ENCODE measurements at regions of chr18 and their contacts with region 1.

Region 1: GRCh38 chr18:6543330-6543908 is 128.7 kb upstream of the L3MBTL4 start:
- DNase-seq: peak; percentile 72
- ATAC-seq: peak; percentile 21; the same call in 1 of the 2 replicates
- H3K4me3 ChIP-seq: no peak overlapping the region
- H3K27ac ChIP-seq: no peak overlapping the region
- H3K4me1 ChIP-seq: peaks cover 17% of the 10 kb centered on the region; the same call in 1 of the 2 replicates
- H3K27me3 ChIP-seq: no peaks in the 10 kb centered on the region
- CTCF ChIP-seq: peak; percentile 77

Region 2: GRCh38 chr18:5527603-5528002 is 1015.8 kb before region 1 on chr18:
- CTCF ChIA-PET with region 1: no interaction called
- POLR2A ChIA-PET with region 1: no interaction called
- intact Hi-C with region 1: no loop called
- DNase-seq: no peak
- ATAC-seq: peak; percentile 62
- H3K4me3 ChIP-seq: no peak overlapping the region
- H3K27ac ChIP-seq: no peak overlapping the region
- H3K4me1 ChIP-seq: no peaks in the 10 kb centered on the region
- H3K27me3 ChIP-seq: no peaks in the 10 kb centered on the region
- CTCF ChIP-seq: no peak

Region 3: GRCh38 chr18:6659963-6660725 is 116.7 kb after region 1 on chr18:
- CTCF ChIA-PET with region 1: no interaction called
- POLR2A ChIA-PET with region 1: no interaction called
- intact Hi-C with region 1: loop called (anchors 5 kb)
- DNase-seq: no peak
- ATAC-seq: no peak
- H3K4me3 ChIP-seq: no peak overlapping the region
- H3K27ac ChIP-seq: no peak overlapping the region
- H3K4me1 ChIP-seq: peaks cover 14% of the 10 kb centered on the region
- H3K27me3 ChIP-seq: no peaks in the 10 kb centered on the region
- CTCF ChIP-seq: no peak

Region 4: DNA sequence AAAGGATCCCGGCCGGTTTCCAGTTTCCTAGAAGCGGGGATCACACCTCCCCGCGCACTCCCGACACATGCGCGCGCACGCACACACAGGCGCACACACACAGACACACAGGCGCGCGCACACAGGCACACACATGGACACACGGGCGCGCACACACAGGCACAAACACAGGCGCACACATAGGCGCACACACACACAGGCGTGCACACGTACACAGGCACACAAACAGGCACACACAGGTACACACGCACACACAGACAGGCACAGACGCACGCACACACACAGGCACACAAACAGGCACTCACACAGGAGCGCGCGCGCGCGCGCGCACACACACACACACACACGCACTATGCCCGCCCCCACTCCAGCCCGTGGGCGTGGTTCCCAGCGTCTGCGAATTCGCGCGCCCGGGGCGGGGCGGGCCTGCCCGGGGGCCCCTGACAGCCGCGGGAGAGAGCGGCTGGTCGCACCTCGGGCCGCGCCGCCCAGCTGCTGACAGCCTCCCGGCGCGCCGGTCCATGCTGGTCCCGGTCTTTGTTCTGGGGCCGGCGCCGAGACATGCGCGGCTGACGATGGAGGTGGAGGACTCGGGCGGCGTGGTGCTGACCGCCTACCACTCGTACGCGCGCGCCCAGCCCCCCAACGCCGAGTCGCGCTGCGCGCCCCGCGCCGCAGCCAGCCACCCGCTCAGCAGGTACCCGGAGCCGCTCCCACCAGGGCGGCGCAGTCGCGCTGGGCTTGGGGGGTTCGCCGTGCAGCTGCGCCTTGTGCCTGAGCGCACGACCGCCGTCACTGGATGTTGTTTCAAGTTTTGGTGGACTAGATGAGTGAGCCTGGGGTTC is 186.1 kb after region 1 on chr18 and contains the start of gene ARHGAP28:
- CTCF ChIA-PET with region 1: interaction called, 3 read pairs
- POLR2A ChIA-PET with region 1: no interaction called
- intact Hi-C with region 1: loop called (anchors 2 kb)
- DNase-seq: peak; percentile 89
- ATAC-seq: peak; percentile 74
- H3K4me3 ChIP-seq: peak within 1 kb of the TSS; percentile 67
- H3K27ac ChIP-seq: peak within 1 kb of the TSS; percentile 67
- H3K4me1 ChIP-seq: peaks cover 37% of the 10 kb centered on the region
- H3K27me3 ChIP-seq: no peaks in the 10 kb centered on the region
- CTCF ChIP-seq: peak; percentile 53
- total RNA-seq, gene ARHGAP28: 8.1 and 10.0 TPM in 2 replicates

Region 5: DNA sequence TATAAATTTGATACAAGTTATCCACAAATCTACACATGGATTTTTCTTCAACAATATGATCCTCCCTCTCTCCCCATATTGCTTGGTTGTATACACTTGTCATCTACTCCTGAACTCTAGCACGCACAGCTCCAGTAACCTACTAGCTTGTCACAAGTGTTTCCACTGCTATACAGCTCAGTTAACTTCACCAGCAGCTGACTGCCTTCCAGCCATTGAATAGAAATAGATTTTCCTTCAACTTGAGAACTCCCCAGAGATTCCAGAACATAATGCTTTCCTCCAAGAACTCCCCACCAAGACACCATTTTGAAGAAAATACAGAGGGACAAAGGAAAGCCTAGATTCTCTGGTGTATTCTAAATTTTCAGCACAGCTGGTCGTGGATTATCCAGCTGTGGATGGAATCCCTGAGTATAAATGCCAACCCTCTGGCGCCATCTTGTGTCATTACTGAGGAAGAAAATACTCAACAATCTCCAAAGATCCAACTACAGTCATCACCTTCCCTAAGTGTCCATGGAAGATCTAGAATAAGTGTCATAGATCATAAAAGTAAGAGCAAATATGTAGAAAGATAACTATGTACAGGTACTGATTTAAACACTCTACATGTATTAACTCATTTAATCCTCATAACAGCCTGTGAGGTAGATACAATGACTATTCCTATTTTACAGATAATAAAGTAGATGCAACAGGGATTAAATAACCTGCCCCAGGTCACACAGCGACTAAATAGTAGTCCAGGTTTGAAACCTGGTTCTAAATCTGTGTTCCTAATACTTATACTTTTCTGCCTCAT is 342.8 kb after region 1 on chr18:
- CTCF ChIA-PET with region 1: interaction called, 15 read pairs
- POLR2A ChIA-PET with region 1: no interaction called
- intact Hi-C with region 1: loop called (anchors 1 kb)
- DNase-seq: peak; percentile 73
- ATAC-seq: peak; percentile 96
- H3K4me3 ChIP-seq: no peak overlapping the region
- H3K27ac ChIP-seq: no peak overlapping the region
- H3K4me1 ChIP-seq: no peaks in the 10 kb centered on the region
- H3K27me3 ChIP-seq: no peaks in the 10 kb centered on the region
- CTCF ChIP-seq: peak; percentile 90

Region 6: DNA sequence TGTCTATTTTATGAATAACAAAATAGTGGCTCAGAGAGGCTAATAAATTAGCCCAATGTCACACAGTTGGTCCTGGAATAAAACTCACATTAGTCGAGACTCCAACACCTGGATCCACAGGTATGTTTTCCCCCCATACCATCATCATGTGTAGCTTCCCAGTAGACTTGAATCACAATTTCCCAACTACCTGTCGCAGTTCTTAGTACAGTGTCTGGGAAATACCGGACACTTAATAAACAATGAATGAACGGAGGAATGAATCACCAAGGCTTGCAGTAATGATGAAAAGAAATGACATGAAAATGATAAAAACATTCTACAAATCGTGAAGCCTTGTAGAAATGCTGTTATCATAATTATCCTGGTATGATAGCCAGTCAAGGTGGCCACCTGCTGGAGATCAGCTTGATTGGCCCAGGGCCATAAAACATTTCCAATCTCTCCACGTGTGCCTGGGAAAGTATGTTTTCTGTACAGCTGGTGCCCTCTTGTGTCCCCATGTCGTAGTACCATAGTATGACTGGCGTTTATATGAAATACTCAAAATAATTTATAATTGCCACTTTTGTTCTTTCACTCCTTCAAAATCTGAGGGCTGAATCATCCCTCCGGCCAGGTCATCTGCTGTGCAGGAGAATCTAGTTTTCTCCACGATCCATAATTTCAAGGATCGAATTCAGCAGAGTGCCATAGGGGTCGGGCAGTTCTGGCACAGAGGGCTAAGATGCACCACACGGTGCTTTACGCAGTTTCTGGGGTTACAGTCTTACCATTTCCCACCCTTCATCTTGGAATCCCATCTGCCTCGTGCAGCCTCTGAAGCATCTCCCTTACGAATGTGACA is 478.8 kb after region 1 on chr18:
- CTCF ChIA-PET with region 1: no interaction called
- POLR2A ChIA-PET with region 1: no interaction called
- intact Hi-C with region 1: loop called (anchors 5 kb)
- DNase-seq: peak; percentile 92
- ATAC-seq: peak; percentile 97
- H3K4me3 ChIP-seq: no peak overlapping the region
- H3K27ac ChIP-seq: no peak overlapping the region
- H3K4me1 ChIP-seq: no peaks in the 10 kb centered on the region
- H3K27me3 ChIP-seq: peaks cover 30% of the 10 kb centered on the region
- CTCF ChIP-seq: peak; percentile 95

Region 7: DNA sequence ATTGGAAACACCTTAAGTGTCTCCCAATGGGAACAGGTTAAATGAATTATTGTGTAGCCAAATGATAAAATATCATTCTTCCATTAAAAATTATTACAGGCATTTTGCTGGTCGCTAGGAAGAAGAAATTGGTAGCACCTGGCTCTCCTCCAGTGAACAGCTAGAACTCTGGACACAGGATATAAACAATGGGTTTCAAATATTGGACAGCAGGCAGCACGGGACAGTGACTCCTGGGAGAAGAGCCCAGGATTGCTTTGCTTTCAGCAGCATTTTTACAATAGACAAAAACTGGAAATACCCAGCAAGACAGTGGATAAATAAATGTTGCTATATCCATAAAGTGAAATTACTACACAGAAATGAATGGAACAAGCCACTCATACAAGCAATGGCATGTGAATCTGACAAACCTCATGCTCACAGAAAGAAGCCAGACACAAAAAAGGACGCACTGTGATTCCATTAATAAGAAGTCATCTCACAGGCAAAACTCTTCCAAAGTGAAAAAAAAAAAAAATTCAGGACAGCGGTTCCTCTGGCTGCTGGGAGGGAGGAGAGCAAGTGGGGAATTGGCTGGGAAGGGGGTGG is 523.6 kb after region 1 on chr18:
- CTCF ChIA-PET with region 1: no interaction called
- POLR2A ChIA-PET with region 1: no interaction called
- intact Hi-C with region 1: no loop called
- DNase-seq: no peak
- ATAC-seq: no peak
- H3K4me3 ChIP-seq: no peak overlapping the region
- H3K27ac ChIP-seq: no peak overlapping the region
- H3K4me1 ChIP-seq: no peaks in the 10 kb centered on the region
- H3K27me3 ChIP-seq: peaks cover 96% of the 10 kb centered on the region
- CTCF ChIP-seq: no peak

Measured in PC-3 (cell line).